BJ (cell line): ENCODE measurements at regions of chr7 and their contacts with region 1.

Region 1: DNA sequence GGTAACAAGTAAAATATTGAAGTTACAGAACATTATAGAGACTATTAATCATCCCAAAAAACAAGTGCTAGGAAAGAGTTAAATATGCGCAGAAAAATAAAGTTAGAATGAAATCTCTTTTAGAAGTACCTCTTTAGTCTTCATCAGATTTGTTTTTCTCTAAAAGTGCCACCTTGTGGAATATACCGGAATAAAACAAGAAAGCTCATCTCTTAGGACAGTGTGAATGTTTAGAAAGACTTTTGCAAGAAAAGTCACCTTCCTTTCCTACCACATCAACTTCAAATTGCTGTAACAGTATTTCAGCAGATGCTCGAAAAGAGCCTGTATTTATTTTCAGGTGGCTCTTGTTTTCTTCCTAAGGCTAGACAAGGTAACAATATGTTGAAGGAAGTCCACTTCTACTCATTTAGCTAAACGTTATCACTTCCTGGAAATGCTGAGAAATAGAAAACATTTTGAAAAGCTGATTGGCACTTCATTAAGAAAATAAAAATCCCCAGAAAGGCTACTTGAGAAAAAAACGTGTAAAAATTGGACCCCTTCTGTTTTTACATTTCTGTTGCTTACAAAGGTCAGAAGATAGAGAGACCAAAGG is 19.8 kb upstream of the FAM133B start:
- DNase-seq: no peak
- H3K4me3 ChIP-seq: no peak overlapping the region
- H3K27me3 ChIP-seq: no peaks in the 10 kb centered on the region
- CTCF ChIP-seq: peak; percentile 50

Region 2: GRCh38 chr7:93043385-93043985 is 433.5 kb after region 1 on chr7:
- CTCF ChIA-PET with region 1: interaction called, 3 read pairs
- POLR2A ChIA-PET with region 1: interaction called, 10 read pairs
- DNase-seq: peak; percentile 48
- H3K4me3 ChIP-seq: peak overlapping the region; percentile 27; the same call in 1 of the 2 replicates
- H3K27me3 ChIP-seq: no peaks in the 10 kb centered on the region
- CTCF ChIP-seq: no peak